HepG2 (cell line): ENCODE measurements at regions of chr9 and their contacts with region 1.

Region 1: DNA sequence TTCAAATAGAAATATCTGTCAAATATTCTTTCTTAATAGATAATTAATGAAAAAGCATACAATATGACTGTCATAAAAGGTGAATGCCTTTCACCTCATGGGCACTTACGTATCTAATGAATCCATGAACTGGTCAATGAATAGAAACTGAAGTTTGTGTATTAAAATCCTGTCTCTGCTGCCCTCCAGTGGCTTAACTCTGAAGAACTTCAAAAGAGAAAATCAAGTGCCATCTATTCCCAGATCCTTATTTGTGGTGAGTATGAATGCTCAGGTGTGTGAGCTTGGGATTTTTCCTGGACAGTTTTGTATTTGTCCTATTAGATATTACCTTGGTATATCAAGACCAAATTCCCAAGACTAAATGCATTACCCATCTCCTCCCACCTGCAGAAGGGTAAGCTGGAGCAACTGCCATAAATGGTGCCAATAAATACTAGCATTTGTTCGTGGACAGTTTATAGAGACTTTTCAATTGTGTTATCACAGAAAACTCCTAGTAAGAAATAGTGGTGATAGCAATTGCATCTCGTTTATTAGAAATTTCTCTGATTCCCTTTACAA is 44.0 kb upstream of the SVEP1 start:
- DNase-seq: peak; percentile 55
- ATAC-seq: peak; percentile 58
- H3K4me3 ChIP-seq: no peak overlapping the region
- H3K27ac ChIP-seq: no peak overlapping the region
- H3K4me1 ChIP-seq: no peaks in the 10 kb centered on the region
- H3K27me3 ChIP-seq: no peaks in the 10 kb centered on the region
- CTCF ChIP-seq: peak; percentile 73
- EP300 ChIP-seq: no peak
- POLR2A ChIP-seq: no peak
- RAD21 ChIP-seq: peak; percentile 50; the same call in 1 of the 2 replicates

Region 2: GRCh38 chr9:109894921-109895758 is 728.4 kb before region 1 on chr9:
- CTCF ChIA-PET with region 1: no interaction called
- POLR2A ChIA-PET with region 1: no interaction called
- in situ Hi-C with region 1: no loop called
- intact Hi-C with region 1: loop called (anchors 5 kb)
- DNase-seq: no peak
- ATAC-seq: no peak
- H3K4me3 ChIP-seq: no peak overlapping the region
- H3K27ac ChIP-seq: no peak overlapping the region
- H3K4me1 ChIP-seq: peaks cover 9% of the 10 kb centered on the region
- H3K27me3 ChIP-seq: peaks cover 0 to 1% of the 10 kb centered on the region in 2 experiments; a peak in 1 of 5 replicates
- CTCF ChIP-seq: no peak
- EP300 ChIP-seq: no peak
- POLR2A ChIP-seq: no peak
- RAD21 ChIP-seq: no peak

Region 3: GRCh38 chr9:110069326-110070248 is 554.0 kb before region 1 on chr9:
- CTCF ChIA-PET with region 1: no interaction called
- POLR2A ChIA-PET with region 1: no interaction called
- in situ Hi-C with region 1: no loop called
- intact Hi-C with region 1: loop called (anchors 5 kb)
- DNase-seq: no peak
- ATAC-seq: no peak
- H3K4me3 ChIP-seq: no peak overlapping the region
- H3K27ac ChIP-seq: no peak overlapping the region
- H3K4me1 ChIP-seq: peaks cover 10% of the 10 kb centered on the region; the same call in 1 of the 2 replicates
- H3K27me3 ChIP-seq: no peaks in the 10 kb centered on the region
- CTCF ChIP-seq: no peak
- EP300 ChIP-seq: no peak
- POLR2A ChIP-seq: no peak
- RAD21 ChIP-seq: no peak

Region 4: GRCh38 chr9:110427497-110428104 is 195.9 kb before region 1 on chr9:
- CTCF ChIA-PET with region 1: interaction called, 5 read pairs
- POLR2A ChIA-PET with region 1: no interaction called
- in situ Hi-C with region 1: no loop called
- intact Hi-C with region 1: loop called (anchors 2 kb)
- DNase-seq: peak; percentile 18
- ATAC-seq: peak; percentile 83
- H3K4me3 ChIP-seq: no peak overlapping the region
- H3K27ac ChIP-seq: no peak overlapping the region
- H3K4me1 ChIP-seq: no peaks in the 10 kb centered on the region
- H3K27me3 ChIP-seq: no peaks in the 10 kb centered on the region
- CTCF ChIP-seq: peak; percentile 68
- EP300 ChIP-seq: no peak
- POLR2A ChIP-seq: no peak
- RAD21 ChIP-seq: no peak

Region 5: GRCh38 chr9:110579034-110579861 is 44.3 kb before region 1 on chr9 and contains the start of gene SVEP1:
- CTCF ChIA-PET with region 1: no interaction called
- POLR2A ChIA-PET with region 1: no interaction called
- in situ Hi-C with region 1: no loop called
- intact Hi-C with region 1: no loop called
- DNase-seq: no peak
- ATAC-seq: peak; percentile 77
- H3K4me3 ChIP-seq: peak within 1 kb of the TSS in 1 of 3 experiments; percentile 23; a peak in 1 of 6 replicates
- H3K27ac ChIP-seq: no peak within 1 kb of the TSS
- H3K4me1 ChIP-seq: no peaks in the 10 kb centered on the region
- H3K27me3 ChIP-seq: peaks cover 1 to 40% of the 10 kb centered on the region in 2 experiments; a peak in 2 of 5 replicates
- CTCF ChIP-seq: no peak
- EP300 ChIP-seq: no peak
- POLR2A ChIP-seq: no peak
- RAD21 ChIP-seq: no peak
- total RNA-seq, gene SVEP1: not detected in 2 replicates

Region 6: GRCh38 chr9:111298731-111299598 is 675.4 kb after region 1 on chr9:
- CTCF ChIA-PET with region 1: no interaction called
- POLR2A ChIA-PET with region 1: no interaction called
- in situ Hi-C with region 1: loop called (anchors 25 kb)
- intact Hi-C with region 1: no loop called
- DNase-seq: peak; percentile 22
- ATAC-seq: peak; percentile 50; the same call in 1 of the 3 replicates
- H3K4me3 ChIP-seq: no peak overlapping the region
- H3K27ac ChIP-seq: no peak overlapping the region
- H3K4me1 ChIP-seq: no peaks in the 10 kb centered on the region
- H3K27me3 ChIP-seq: no peaks in the 10 kb centered on the region
- CTCF ChIP-seq: peak; percentile 72
- EP300 ChIP-seq: no peak
- POLR2A ChIP-seq: no peak
- RAD21 ChIP-seq: peak; percentile 53; the same call in 1 of the 2 replicates